ENCODE measurements at regions of chr9 and their contacts with region 1.

Region 1: DNA sequence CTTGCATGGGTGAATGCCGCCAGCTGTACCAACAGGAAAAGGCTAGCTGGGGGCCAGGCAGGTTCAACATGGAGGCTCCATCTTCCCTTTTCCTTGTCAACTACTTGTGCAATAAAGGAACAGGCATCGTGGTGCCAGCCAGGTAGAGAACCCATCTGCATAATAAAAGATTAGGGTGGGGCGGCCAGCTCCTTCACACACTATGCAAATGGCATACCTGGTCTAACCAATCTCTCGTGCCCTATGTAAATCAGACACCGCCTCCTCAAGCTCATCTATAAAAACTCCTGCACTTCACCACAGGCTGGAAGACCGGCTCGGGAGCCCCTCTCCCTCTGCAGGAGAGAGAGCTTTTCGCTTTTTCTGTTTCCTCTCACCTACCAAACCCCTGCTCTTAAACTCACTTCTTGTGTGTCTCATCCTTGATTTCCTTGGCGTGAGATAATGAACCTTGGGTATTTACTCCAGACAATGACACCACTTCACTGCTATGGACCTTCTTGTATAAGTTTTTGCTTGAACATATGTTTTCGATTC is 244.3 kb upstream of the PUM3 start:
- DNase-seq: no peak
- ATAC-seq: no peak
- H3K4me3 ChIP-seq: no peak overlapping the region
- H3K27ac ChIP-seq: no peak overlapping the region
- H3K4me1 ChIP-seq: no peaks in the 10 kb centered on the region
- H3K27me3 ChIP-seq: no peaks in the 10 kb centered on the region
- CTCF ChIP-seq: no peak
- POLR2A ChIP-seq: no peak

Region 2: GRCh38 chr9:2764353-2764752 is 323.9 kb before region 1 on chr9:
- in situ Hi-C with region 1: no loop called
- intact Hi-C with region 1: no loop called
- DNase-seq: no peak
- ATAC-seq: no peak
- H3K4me3 ChIP-seq: no peak overlapping the region
- H3K27ac ChIP-seq: no peak overlapping the region
- H3K4me1 ChIP-seq: peaks cover 0 to 4% of the 10 kb centered on the region in 2 donors
- H3K27me3 ChIP-seq: no peaks in the 10 kb centered on the region
- CTCF ChIP-seq: no peak
- POLR2A ChIP-seq: no peak

Region 3: GRCh38 chr9:2919347-2919746 is 168.9 kb before region 1 on chr9:
- in situ Hi-C with region 1: no loop called
- intact Hi-C with region 1: no loop called
- DNase-seq: no peak
- ATAC-seq: no peak
- H3K4me3 ChIP-seq: no peak overlapping the region
- H3K27ac ChIP-seq: no peak overlapping the region
- H3K4me1 ChIP-seq: no peaks in the 10 kb centered on the region
- H3K27me3 ChIP-seq: no peaks in the 10 kb centered on the region
- CTCF ChIP-seq: no peak
- POLR2A ChIP-seq: no peak

Region 4: GRCh38 chr9:2970864-2971263 is 117.4 kb before region 1 on chr9:
- in situ Hi-C with region 1: no loop called
- intact Hi-C with region 1: no loop called
- DNase-seq: no peak
- ATAC-seq: no peak
- H3K4me3 ChIP-seq: no peak overlapping the region
- H3K27ac ChIP-seq: no peak overlapping the region
- H3K4me1 ChIP-seq: no peaks in the 10 kb centered on the region
- H3K27me3 ChIP-seq: no peaks in the 10 kb centered on the region
- CTCF ChIP-seq: no peak
- POLR2A ChIP-seq: no peak

Region 5: DNA sequence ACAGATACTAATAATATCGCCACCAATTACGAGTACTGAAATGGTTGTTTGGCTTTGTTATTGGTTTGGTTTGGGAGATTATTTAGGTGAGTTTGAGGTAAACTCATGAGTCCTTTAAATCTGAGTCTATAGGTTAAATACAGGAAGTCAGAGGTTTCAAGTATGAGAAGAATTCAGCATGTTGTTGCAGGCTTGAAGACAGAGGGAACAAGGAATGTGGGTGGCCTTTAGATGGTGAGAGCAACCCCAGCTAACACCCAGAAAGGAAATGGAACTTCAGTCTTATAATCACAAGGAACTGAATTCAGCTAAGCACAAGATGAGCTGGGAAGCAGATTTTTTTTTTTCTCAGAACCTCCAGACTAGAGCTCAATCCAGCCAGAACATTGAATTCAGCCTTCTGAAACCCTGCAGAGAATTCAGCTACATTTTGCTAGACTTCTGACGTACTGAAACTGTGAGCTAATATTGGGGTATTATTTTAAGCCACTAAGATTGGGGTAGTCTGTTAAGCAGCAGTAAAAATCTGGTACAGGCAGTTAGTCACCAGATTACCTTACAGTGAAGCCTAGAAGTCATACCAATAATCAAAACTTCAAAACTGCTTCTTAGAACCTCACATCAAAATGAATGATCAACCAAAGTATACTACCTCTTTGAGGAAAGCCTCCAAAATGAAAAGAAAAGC is 28.3 kb before region 1 on chr9:
- in situ Hi-C with region 1: no loop called
- intact Hi-C with region 1: loop called (anchors 2 kb)
- DNase-seq: no peak
- ATAC-seq: no peak
- H3K4me3 ChIP-seq: no peak overlapping the region
- H3K27ac ChIP-seq: no peak overlapping the region
- H3K4me1 ChIP-seq: no peaks in the 10 kb centered on the region
- H3K27me3 ChIP-seq: no peaks in the 10 kb centered on the region
- CTCF ChIP-seq: no peak
- POLR2A ChIP-seq: no peak

Measured in gastrocnemius medialis (tissue), 4 donors.